ENCODE measurements at regions of chr7 and their contacts with region 1.

Region 1: DNA sequence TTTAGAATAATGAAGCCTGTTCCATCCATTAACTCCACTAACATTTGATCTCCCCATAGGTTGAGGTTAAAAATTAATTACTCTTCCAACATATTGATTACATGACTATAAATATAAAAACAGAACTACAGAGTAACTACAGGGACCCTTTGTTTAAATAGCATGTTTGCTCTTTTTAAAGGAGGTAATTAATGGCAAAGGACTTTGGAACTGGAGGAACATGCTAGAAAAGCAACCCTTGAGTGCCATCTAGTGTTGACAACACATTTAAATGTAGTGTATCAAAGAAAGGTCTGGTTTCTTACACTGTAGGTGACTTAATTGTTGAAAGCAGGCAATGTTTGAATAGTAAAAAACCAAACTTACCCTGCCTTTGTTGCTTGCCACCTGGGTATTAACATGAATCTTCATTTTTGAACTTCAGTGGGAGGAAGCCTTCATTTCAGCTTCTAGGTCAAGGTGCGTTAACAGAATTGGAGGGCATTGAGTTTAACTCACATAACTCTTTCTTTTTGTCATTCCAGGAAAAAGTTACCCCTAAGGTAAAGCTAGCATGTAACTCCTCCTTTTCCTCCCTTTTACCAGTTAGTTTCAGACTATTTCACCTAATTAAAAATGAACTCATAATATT is 52.6 kb upstream of the CAPZA2 start:
- DNase-seq: peak; percentile 57
- H3K4me3 Mint-ChIP-seq: peak overlapping the region; percentile 36
- H3K27ac Mint-ChIP-seq: peak overlapping the region; percentile 64
- H3K4me1 Mint-ChIP-seq: peaks cover 64% of the 10 kb centered on the region
- H3K27me3 Mint-ChIP-seq: no peaks in the 10 kb centered on the region
- CTCF ChIP-seq: peak; percentile 30

Region 2: GRCh38 chr7:116173051-116174028 is 636.4 kb before region 1 on chr7:
- CTCF ChIA-PET with region 1: no interaction called
- intact Hi-C with region 1: loop called (anchors 2 kb)
- DNase-seq: peak; percentile 38
- H3K4me3 Mint-ChIP-seq: no peak overlapping the region
- H3K27ac Mint-ChIP-seq: no peak overlapping the region
- H3K4me1 Mint-ChIP-seq: peaks cover 23% of the 10 kb centered on the region
- H3K27me3 Mint-ChIP-seq: peaks cover 17% of the 10 kb centered on the region
- CTCF ChIP-seq: peak; percentile 25

Region 3: DNA sequence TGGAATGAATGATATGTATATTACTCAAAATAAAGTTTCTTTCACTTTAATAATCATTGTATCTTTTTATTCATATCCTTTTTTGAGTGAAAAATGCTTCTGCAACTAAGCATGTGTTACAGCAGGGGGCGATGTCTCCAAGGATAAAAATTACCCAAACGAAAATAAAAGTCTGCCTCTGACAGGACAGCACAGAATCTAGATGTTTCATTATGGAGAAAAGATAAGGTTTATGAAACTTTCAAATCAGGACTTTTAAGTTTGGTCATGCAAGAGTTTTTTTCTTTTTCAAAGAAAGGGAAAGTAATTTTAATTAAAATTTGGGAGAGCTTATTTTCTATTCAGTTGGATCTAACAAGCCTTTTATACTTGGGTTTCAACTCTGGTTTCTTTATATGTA is 551.0 kb before region 1 on chr7:
- CTCF ChIA-PET with region 1: no interaction called
- intact Hi-C with region 1: loop called (anchors 2 kb)
- DNase-seq: peak; percentile 54
- H3K4me3 Mint-ChIP-seq: no peak overlapping the region
- H3K27ac Mint-ChIP-seq: peak overlapping the region; percentile 69
- H3K4me1 Mint-ChIP-seq: peaks cover 20% of the 10 kb centered on the region
- H3K27me3 Mint-ChIP-seq: no peaks in the 10 kb centered on the region
- CTCF ChIP-seq: peak; percentile 53

Region 4: DNA sequence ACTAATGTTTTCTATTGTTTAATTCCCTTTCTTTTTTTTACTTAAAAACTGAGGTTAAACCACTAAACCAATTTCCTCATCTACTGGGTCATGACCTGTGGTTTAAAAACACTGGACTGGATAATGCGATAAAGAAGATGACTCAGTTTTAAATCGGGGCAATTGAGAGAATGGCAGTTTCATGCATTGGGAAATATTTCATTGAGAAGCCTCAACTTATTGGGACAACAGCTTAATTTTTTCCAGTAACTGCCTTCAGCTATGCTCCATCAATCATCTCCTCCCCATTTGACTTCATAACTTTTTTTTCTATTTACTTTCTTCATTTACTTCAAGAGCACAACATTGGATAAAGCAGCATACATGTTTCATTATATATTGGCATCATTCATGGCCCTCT is 199.5 kb before region 1 on chr7:
- CTCF ChIA-PET with region 1: no interaction called
- intact Hi-C with region 1: loop called (anchors 5 kb)
- DNase-seq: no peak
- H3K4me3 Mint-ChIP-seq: no peak overlapping the region
- H3K27ac Mint-ChIP-seq: no peak overlapping the region
- H3K4me1 Mint-ChIP-seq: peaks cover 32% of the 10 kb centered on the region
- H3K27me3 Mint-ChIP-seq: no peaks in the 10 kb centered on the region
- CTCF ChIP-seq: no peak

Region 5: DNA sequence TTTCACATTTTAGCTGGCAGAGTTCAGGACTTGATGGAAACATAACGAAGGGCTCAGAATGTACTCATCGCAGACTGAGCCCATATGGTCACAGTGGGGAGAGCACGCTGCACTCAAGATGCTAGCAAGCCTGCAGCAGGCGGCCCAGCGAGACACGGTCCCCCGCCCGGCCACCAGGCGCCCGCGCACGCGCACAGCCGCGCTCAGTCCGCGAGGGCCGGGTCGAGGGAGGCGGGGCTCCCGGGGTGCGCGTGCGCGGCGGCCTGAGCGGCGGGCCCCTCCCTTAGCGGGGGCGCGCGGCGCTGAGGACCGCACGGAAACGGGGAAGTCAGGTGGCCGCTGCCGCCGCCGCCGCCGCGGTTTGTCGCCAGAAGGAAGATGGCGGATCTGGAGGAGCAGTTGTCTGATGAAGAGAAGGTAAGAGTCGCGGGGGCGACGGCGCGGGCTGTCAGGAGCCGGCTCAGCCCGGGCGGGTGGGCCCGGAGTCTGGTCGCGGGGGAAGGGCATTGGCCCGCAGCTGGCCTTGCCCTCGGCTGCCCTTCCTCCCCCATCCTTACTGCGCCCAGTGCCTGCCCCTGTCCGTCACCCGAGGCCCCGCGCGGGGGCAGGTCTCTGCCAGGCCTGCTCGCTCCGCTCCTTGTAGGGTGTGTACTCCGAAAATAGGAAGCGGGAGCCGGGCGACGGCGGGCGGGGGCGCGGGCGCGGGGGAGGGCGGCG is 52.6 kb after region 1 on chr7 and contains the start of gene CAPZA2:
- CTCF ChIA-PET with region 1: no interaction called
- intact Hi-C with region 1: loop called (anchors 2 kb)
- DNase-seq: peak; percentile 97
- H3K4me3 Mint-ChIP-seq: peak within 1 kb of the TSS; percentile 88
- H3K27ac Mint-ChIP-seq: peak within 1 kb of the TSS; percentile 94
- H3K4me1 Mint-ChIP-seq: peaks cover 23% of the 10 kb centered on the region
- H3K27me3 Mint-ChIP-seq: no peaks in the 10 kb centered on the region
- CTCF ChIP-seq: peak; percentile 50
- total RNA-seq, gene CAPZA2: 209 TPM in 2 replicates